Heart right ventricle (tissue), 16 donors: ENCODE measurements at regions of chr2 and their contacts with region 1.

Region 1: DNA sequence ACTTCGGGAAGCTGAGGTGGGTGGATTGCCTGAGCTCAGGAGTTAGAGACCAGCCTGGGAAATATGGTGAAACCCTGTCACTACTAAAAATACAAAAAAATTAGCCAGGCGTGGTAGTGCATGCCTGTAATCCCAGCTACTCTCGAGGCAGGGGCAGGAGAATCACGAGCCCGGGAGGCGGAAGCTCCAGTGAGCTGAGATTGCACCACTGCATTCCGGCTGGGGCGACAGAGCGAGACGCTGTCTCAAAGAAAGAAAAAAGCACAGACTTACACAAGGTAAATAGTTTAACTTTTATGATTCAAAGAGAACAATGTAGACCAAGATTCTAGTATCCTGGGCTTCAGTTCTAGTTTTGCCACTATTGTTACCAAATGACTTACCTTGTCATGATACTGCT is 37.4 kb downstream of the NCKAP1 start:
- DNase-seq: no peak
- ATAC-seq: peak in 3 of 8 donors; percentile 60 to 63 (median 62)
- H3K4me3 ChIP-seq: no peak overlapping the region
- H3K27ac ChIP-seq: no peak overlapping the region
- H3K4me1 ChIP-seq: peaks cover 0 to 34% (median 16%) of the 10 kb centered on the region in 9 donors
- H3K27me3 ChIP-seq: no peaks in the 10 kb centered on the region
- CTCF ChIP-seq: no peak

Region 2: DNA sequence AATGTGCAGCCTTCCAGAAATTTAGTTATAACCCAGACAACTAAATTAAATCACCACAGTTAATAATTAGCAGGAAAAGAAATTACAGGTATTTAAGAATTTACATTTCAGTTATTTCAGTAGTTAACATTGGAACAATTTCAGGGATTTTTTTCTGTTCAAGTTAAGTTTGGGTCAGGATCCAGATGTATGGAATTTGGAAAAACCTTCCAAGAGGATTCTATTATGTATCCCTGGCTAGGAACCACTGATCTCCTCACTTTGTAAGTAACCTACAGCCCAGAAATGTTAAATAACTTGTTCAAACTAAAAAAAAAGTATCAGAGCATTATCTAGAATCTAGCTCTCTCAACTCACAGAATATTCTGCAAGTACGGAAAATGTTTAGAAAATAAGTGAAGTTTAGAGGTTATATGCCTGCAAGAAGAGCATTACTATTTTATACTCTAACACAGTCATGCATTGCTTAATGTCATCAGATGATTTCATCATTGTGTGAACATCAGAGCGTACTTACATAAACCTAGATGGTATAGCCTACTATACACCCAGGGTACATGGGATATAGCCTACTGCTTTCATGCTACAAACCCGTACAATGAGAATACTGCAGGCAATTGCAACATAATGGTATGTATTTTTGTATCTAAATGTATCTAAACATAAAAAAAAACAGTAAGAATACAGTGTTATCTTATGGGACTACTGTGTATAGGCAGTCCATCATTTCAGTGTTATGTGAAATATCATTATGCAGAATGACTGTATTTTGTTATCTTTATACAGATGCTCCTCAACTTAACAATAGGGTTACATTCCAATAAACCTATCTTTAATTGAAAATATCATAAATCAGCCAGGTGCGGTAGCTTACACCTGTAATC is 31.3 kb after region 1 on chr2:
- intact Hi-C with region 1: loop called in 2 of 10 experiments (anchors 5 kb)
- DNase-seq: no peak
- ATAC-seq: peak in 1 of 8 donors; percentile 10
- H3K4me3 ChIP-seq: no peak overlapping the region
- H3K27ac ChIP-seq: peak overlapping the region in 4 of 10 donors; percentile 5 to 62 (median 26)
- H3K4me1 ChIP-seq: peaks cover 2 to 97% (median 71%) of the 10 kb centered on the region in 9 donors
- H3K27me3 ChIP-seq: peaks cover 0 to 91% (median 0%) of the 10 kb centered on the region in 7 donors
- CTCF ChIP-seq: no peak

Region 3: DNA sequence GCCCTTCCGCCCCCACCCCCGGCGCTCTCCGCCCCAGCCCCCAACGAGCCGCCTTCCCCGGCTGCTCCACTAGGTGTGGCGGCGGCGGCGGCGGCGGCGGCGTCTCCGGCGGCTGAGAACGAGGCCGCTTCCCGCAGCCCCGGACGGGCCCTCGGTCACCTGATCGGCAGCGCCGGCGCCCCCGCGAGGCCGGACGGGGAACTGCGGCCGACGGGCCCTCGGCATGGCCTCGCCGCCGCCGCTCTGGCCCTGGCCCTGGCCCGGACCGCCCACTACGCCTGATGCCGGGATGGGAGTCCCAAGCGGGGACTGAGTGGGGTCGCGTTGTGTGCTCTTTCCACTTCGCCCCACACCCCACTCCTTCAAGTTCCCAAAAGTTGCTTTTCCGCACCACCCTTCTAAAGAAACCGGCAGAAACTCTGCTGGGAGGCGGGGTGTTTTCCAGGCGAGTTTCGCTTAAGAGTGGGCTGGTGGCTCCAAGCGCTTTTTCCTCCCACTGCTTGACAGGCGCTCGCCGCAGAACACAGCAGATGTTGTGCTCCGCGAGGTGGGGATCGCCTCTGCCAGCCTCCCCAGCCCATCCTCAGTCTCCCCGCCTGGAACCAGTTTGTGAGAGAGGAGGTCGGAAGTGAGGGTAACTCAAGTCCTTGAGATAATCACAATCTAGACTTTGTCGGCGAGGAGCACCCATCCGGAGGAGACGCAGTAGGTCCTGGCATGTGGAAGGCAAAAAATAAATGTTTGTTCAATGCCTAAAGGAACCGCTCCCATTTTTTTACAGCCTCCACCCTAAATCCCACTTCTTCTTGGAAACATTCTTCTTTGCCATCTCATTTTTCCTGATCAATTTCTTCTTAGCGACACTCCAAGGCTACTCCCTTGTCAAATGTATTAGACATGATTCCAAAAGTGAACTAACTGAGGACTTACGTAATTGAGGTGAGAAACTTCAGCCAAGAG is 37.8 kb after region 1 on chr2 and contains the start of gene NCKAP1:
- intact Hi-C with region 1: loop called in 2 of 10 experiments (anchors 5 kb)
- DNase-seq: peak; percentile 91 to 95
- ATAC-seq: peak; percentile 92 to 96 (median 94)
- H3K4me3 ChIP-seq: peak within 1 kb of the TSS; percentile 69 to 88 (median 83)
- H3K27ac ChIP-seq: peak within 1 kb of the TSS; percentile 95 to 100 (median 99)
- H3K4me1 ChIP-seq: peaks cover 0 to 49% (median 37%) of the 10 kb centered on the region in 9 donors
- H3K27me3 ChIP-seq: peaks cover 0 to 93% (median 0%) of the 10 kb centered on the region in 7 donors
- CTCF ChIP-seq: peak; percentile 81 to 99 (median 93)
- total RNA-seq, gene NCKAP1: 118 to 153 (median 130) TPM